Naive thymus-derived CD4-positive, alpha-beta T cell (primary cell): ENCODE measurements at regions of chr9 and their contacts with region 1.

Region 1: DNA sequence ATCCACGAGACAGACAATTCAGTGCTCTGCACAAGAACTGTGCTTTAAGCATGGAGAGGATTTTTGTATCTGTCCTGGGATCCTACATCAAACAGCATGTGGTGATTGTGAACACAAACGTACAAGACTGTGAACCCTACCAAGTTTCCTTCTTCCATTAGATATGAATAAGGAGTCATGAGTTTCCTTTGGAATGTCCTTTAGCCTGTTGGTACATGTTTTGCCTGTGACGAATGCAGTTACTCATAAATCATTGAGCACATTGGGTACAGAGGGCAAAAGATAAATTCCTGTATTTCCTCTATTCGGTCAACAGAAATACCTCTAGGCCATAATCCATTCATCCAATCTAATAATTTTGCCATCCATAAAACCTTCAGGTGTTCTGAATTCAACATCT is 61.5 kb downstream of the FXN start:
- DNase-seq: no peak
- ATAC-seq: no peak
- H3K4me3 ChIP-seq: no peak overlapping the region
- H3K4me3 Mint-ChIP-seq: no peak overlapping the region
- H3K27ac ChIP-seq: no peak overlapping the region
- H3K27ac Mint-ChIP-seq: no peak overlapping the region
- H3K4me1 ChIP-seq: no peaks in the 10 kb centered on the region
- H3K4me1 Mint-ChIP-seq: no peaks in the 10 kb centered on the region
- H3K27me3 ChIP-seq: no peaks in the 10 kb centered on the region
- H3K27me3 Mint-ChIP-seq: no peaks in the 10 kb centered on the region

Region 2: GRCh38 chr9:69076550-69076949 is 20.5 kb before region 1 on chr9:
- CTCF ChIA-PET with region 1: no interaction called
- POLR2A ChIA-PET with region 1: no interaction called
- intact Hi-C with region 1: loop called in 1 of 2 experiments (anchors 1 kb)
- DNase-seq: no peak
- ATAC-seq: no peak
- H3K4me3 ChIP-seq: no peak overlapping the region
- H3K4me3 Mint-ChIP-seq: no peak overlapping the region
- H3K27ac ChIP-seq: no peak overlapping the region
- H3K27ac Mint-ChIP-seq: no peak overlapping the region
- H3K4me1 ChIP-seq: no peaks in the 10 kb centered on the region
- H3K4me1 Mint-ChIP-seq: no peaks in the 10 kb centered on the region
- H3K27me3 ChIP-seq: no peaks in the 10 kb centered on the region
- H3K27me3 Mint-ChIP-seq: no peaks in the 10 kb centered on the region